WTC11 (cell line): ENCODE measurements at regions of chr2 and their contacts with region 1.

Region 1: DNA sequence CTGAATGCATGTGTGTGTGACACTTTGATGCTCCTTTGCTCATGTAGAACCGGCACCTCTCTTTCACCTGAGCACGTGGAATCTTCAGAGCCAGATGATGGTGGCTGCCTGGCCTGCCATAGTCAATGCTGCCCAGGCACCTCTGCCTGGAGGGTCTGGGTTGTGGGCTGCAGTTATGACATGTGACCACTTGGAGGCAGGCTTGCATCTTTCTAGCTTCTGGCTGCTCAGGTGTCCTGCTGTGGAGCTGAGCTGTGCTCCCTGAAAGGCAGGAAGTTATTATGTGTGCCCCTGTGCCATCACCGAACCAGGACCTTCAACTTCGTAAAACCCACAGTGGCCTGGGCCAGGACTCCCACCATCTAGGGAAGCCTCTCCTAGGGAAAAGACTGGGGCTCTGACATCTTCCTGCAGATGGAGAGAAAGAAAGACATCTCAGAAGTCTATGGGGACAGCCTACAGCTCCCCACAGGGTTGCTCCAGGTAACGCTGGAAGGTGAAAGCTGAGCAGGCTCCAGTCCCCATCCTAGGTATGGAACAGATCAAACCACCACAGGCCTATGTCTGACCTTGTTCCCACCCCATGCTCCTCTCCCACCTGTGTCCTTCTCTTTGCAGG is 30.2 kb downstream of the PSD4 start:
- DNase-seq: peak; percentile 86
- ATAC-seq: peak; percentile 76
- H3K4me3 Mint-ChIP-seq: no peak overlapping the region
- H3K27ac Mint-ChIP-seq: no peak overlapping the region
- H3K4me1 Mint-ChIP-seq: peaks cover 6% of the 10 kb centered on the region; the same call in 1 of the 2 replicates
- H3K27me3 Mint-ChIP-seq: peaks cover 4% of the 10 kb centered on the region; the same call in 1 of the 2 replicates
- CTCF ChIP-seq: peak; percentile 66

Region 2: GRCh38 chr2:113080134-113080533 is 123.9 kb before region 1 on chr2:
- CTCF ChIA-PET with region 1: interaction called, 96 read pairs
- POLR2A ChIA-PET with region 1: interaction called, 5 read pairs
- DNase-seq: peak; percentile 75
- ATAC-seq: peak; percentile 96
- H3K4me3 Mint-ChIP-seq: no peak overlapping the region
- H3K27ac Mint-ChIP-seq: no peak overlapping the region
- H3K4me1 Mint-ChIP-seq: peaks cover 8% of the 10 kb centered on the region
- H3K27me3 Mint-ChIP-seq: peaks cover 26% of the 10 kb centered on the region
- CTCF ChIP-seq: peak; percentile 39; the same call in 1 of the 2 replicates

Region 3: DNA sequence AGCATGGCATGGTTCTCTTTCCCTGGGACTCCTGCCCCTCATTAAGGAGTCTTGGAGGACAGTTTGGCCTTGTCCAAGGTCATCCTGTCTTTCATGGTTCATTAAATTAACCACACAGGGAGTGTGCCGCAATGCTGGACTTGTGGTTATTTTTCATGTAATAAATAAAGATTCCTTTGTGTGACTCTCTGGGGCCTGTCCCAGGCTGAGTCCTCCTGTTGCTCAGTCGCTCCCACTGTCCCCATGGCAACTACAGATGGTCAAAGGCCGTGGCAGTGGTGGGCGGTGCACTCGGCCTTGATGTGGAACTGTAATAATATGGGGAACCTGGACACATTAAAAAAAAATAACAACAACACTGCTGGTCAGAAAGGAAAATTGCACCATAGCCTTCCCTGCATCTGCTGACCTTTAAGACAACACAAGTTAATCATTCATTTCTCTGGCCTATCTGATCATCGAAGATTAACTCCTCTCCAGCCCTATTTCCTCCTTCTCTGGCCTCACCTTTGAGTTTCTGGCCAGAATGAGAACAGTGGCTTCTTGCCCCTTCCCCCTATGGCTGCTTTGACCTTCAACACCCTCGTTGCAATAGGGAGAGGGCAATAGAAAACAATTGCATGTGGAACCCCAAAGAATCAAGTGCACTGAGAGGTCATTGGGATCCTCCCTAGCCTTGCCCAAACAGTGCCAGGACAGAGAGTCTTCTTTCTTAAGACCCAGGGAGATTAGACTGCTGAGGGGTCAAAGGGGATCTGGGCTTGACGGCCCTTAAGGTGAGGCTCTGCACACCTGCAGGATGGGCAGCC is 14.5 kb after region 1 on chr2:
- CTCF ChIA-PET with region 1: interaction called, 37 read pairs
- POLR2A ChIA-PET with region 1: no interaction called
- DNase-seq: no peak
- ATAC-seq: no peak
- H3K4me3 Mint-ChIP-seq: no peak overlapping the region
- H3K27ac Mint-ChIP-seq: no peak overlapping the region
- H3K4me1 Mint-ChIP-seq: peaks cover 35% of the 10 kb centered on the region
- H3K27me3 Mint-ChIP-seq: 0 out of 2 replicates have a peak, but pooled peaks cover 2% of the 10 kb centered on the region
- CTCF ChIP-seq: no peak

Region 4: DNA sequence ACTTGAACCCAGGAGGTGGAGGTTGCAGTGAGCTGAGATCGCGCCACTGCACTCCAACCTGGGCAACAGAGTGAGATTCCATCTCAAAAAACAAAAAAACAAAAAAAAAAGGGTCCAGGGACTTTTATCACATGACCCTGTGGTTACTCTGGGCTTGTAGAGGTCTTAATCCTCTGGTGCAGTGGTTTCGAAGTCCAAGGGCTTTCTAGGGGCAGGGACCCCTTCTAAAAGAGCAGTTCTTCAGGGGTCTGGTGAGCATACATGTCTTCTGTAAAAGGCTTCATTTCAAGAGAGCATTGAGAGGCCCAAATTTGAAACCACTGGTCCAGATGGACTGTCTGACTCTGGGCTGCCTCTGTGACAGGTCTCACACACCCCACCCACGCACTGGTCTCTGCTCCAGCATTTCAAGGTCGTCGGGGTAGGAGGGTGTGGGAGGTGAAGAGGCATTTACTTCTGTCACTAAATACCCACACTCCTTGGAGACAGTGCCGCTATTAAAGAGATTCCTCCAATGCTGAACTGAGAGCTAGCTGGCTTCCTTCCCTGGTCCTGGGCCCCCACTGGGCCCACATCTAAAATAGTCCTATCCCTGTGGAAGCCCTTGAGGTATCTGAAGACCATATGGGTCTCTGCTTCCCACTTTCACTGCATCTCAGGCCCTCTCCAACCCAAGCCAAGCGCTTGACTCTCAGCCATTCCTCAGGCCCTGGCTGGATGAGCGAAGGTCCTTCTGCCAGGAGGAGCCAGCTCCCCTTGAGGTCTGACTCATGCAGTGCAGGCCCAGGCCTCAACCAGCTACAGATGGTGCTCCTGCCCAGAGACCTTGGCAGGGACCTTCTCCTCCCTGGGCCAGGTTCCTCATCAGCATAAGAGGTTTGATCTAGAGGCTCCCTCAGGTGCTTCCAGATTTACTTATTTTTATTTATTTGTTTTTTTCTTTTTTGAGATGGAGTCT is 29.9 kb after region 1 on chr2:
- CTCF ChIA-PET with region 1: interaction called, 19 read pairs
- POLR2A ChIA-PET with region 1: no interaction called
- DNase-seq: no peak
- ATAC-seq: peak; percentile 42
- H3K4me3 Mint-ChIP-seq: no peak overlapping the region
- H3K27ac Mint-ChIP-seq: no peak overlapping the region
- H3K4me1 Mint-ChIP-seq: peaks cover 3% of the 10 kb centered on the region; the same call in 1 of the 2 replicates
- H3K27me3 Mint-ChIP-seq: 0 out of 2 replicates have a peak, but pooled peaks cover 4% of the 10 kb centered on the region
- CTCF ChIP-seq: no peak

Region 5: DNA sequence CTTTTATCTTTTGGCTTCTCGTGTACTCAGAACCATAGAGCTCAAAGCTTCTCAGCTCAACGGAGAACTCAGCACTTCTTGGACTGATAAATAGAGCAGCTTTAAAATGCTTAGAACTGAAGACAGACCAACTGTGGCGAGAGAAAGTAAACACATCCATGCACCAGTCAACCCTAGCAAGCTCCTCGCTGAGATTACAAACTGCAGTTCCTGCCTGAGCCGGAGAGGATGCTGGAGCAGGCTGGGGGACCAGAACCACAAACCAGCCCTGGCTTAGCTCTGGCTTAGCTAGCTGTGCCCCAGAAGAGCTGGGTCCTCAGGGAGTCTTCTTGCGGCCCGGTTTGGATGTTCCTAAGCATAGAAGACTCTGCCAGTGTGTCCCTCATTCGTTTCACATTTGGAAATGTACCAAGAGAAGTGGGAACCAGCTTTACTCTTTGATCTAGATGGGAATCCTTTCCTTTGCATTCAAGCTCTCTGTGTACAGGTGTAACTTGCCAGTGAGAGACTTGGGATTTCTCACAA is 69.1 kb after region 1 on chr2:
- CTCF ChIA-PET with region 1: interaction called, 29 read pairs
- POLR2A ChIA-PET with region 1: no interaction called
- DNase-seq: peak; percentile 70
- ATAC-seq: peak; percentile 88
- H3K4me3 Mint-ChIP-seq: peak overlapping the region; percentile 19
- H3K27ac Mint-ChIP-seq: no peak overlapping the region
- H3K4me1 Mint-ChIP-seq: peaks cover 33% of the 10 kb centered on the region
- H3K27me3 Mint-ChIP-seq: peaks cover 96% of the 10 kb centered on the region
- CTCF ChIP-seq: no peak

Region 6: DNA sequence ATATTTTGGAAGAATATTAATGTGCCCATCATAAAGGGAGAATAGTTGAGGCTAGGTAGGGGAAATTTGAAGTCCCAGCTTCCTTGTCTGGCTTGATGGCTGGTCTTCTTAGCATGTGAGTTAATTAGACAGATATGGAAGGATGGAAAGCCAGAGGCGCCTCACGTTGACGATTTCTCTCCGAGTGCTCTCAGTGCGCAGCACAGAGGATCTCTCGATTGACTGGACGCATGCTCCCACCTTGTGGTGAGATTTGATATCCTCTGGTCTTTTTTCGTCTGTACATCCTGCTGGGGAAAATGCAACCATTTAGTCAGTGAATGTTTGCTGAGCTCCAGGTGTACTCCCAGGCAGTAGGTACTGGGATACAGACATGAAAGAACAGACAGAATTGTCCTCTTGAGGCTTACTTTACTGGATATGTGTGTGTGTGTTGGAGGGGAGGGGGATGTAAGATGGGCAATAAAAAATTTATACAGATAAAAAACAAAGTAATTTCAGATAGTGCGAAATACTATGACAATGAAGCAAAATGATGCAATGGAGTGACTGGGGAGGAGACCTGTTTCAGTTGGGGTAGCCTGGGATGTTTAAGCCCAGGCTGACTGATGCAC is 166.6 kb after region 1 on chr2:
- CTCF ChIA-PET with region 1: interaction called, 10 read pairs
- POLR2A ChIA-PET with region 1: no interaction called
- DNase-seq: peak; percentile 72
- ATAC-seq: peak; percentile 96
- H3K4me3 Mint-ChIP-seq: no peak overlapping the region
- H3K27ac Mint-ChIP-seq: no peak overlapping the region
- H3K4me1 Mint-ChIP-seq: peaks cover 8% of the 10 kb centered on the region
- H3K27me3 Mint-ChIP-seq: peaks cover 6% of the 10 kb centered on the region
- CTCF ChIP-seq: peak; percentile 54